Activated CD4-positive, alpha-beta memory T cell treated with anti-CD3 and anti-CD28 coated beads for 36 hours (primary cell): ENCODE measurements at regions of chr1 and their contacts with region 1.

Region 1: GRCh38 chr1:228139944-228140656 is at the start of gene GUK1:
- DNase-seq: peak; percentile 100
- H3K4me3 Mint-ChIP-seq: peak within 1 kb of the TSS; percentile 99
- H3K27ac Mint-ChIP-seq: peak within 1 kb of the TSS; percentile 96
- H3K4me1 Mint-ChIP-seq: peaks cover 27% of the 10 kb centered on the region
- H3K27me3 Mint-ChIP-seq: peaks cover 2% of the 10 kb centered on the region
- total RNA-seq, gene GUK1: 229 to 239 TPM

Region 2: GRCh38 chr1:227787513-227788270 is 352.4 kb before region 1 on chr1:
- CTCF ChIA-PET with region 1: no interaction called
- POLR2A ChIA-PET with region 1: no interaction called
- intact Hi-C with region 1: loop called (anchors 1 kb)
- DNase-seq: peak; percentile 97
- H3K4me3 Mint-ChIP-seq: peak overlapping the region; percentile 68
- H3K27ac Mint-ChIP-seq: no peak overlapping the region
- H3K4me1 Mint-ChIP-seq: peaks cover 11% of the 10 kb centered on the region
- H3K27me3 Mint-ChIP-seq: no peaks in the 10 kb centered on the region

Region 3: GRCh38 chr1:228102791-228103620 is 37.1 kb before region 1 on chr1 and contains the start of gene C1orf35:
- CTCF ChIA-PET with region 1: no interaction called
- POLR2A ChIA-PET with region 1: interaction called, 4 read pairs
- intact Hi-C with region 1: loop called (anchors 1 kb)
- DNase-seq: peak; percentile 96
- H3K4me3 Mint-ChIP-seq: peak within 1 kb of the TSS; percentile 91
- H3K27ac Mint-ChIP-seq: peak within 1 kb of the TSS; percentile 88
- H3K4me1 Mint-ChIP-seq: peaks cover 28% of the 10 kb centered on the region
- H3K27me3 Mint-ChIP-seq: no peaks in the 10 kb centered on the region
- total RNA-seq, gene C1orf35: 21.9 to 22.1 TPM

Region 4: GRCh38 chr1:228109073-228109961 is 30.8 kb before region 1 on chr1 and contains the start of gene MRPL55:
- CTCF ChIA-PET with region 1: no interaction called
- POLR2A ChIA-PET with region 1: interaction called, 4 read pairs
- intact Hi-C with region 1: loop called (anchors 1 kb)
- DNase-seq: peak; percentile 99
- H3K4me3 Mint-ChIP-seq: peak within 1 kb of the TSS; percentile 89
- H3K27ac Mint-ChIP-seq: peak within 1 kb of the TSS; percentile 84
- H3K4me1 Mint-ChIP-seq: peaks cover 25% of the 10 kb centered on the region
- H3K27me3 Mint-ChIP-seq: no peaks in the 10 kb centered on the region
- total RNA-seq, gene MRPL55: 51.1 to 52.7 TPM

Region 5: DNA sequence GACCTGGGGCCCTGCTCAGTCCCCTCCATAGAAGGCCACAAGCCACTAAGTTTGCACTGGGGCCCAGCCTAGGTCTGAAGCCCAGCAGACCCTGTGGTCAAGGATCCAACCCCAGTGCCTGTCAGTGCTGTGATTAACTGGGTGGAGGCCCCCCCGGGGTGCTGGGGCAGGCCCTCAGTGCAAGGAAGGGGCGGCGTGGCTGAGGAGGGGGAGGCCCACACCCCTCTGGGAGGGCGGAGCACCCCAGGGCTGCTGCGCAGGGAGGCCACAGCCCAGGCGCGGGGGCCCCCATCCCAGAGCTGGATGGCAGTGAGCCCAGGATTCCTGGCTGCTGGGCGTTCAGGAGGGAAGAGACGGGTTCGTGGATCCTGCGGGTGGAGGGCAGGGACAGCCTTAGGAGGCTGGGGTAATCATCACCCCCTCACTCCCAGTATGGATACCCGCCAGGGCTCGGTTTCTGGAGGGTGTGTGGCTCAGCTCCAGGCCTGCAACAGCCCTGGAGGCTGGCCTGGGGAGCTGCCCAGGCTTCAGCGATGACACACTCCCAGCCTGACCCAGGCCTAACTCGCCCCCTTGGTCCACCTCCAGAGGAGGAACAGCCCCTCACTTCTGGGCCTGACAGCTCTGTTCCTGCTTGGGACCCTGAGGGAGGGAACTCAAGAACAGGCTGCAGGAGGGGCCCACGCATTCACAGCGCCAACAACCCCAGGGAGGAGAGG is 10.5 kb after region 1 on chr1:
- CTCF ChIA-PET with region 1: no interaction called
- POLR2A ChIA-PET with region 1: no interaction called
- intact Hi-C with region 1: no loop called
- DNase-seq: no peak
- H3K4me3 Mint-ChIP-seq: no peak overlapping the region
- H3K27ac Mint-ChIP-seq: no peak overlapping the region
- H3K4me1 Mint-ChIP-seq: peaks cover 8% of the 10 kb centered on the region
- H3K27me3 Mint-ChIP-seq: no peaks in the 10 kb centered on the region

Region 6: DNA sequence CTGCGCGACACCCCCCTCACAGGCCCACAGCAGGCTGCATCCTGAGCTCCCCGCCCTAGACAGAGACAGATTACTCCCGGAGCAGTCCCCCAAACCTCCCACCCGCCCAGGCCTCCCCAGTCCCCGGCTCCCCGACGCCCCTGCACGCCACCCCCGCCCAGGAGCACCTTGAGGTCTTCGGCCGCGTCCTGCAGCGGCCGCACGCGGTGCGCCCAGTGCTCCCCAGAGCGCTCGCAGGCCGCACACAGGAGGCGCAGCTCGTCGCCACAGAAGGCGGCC is 265.8 kb after region 1 on chr1:
- CTCF ChIA-PET with region 1: no interaction called
- POLR2A ChIA-PET with region 1: no interaction called
- intact Hi-C with region 1: loop called (anchors 2 kb)
- DNase-seq: no peak
- H3K4me3 Mint-ChIP-seq: peak overlapping the region; percentile 83
- H3K27ac Mint-ChIP-seq: peak overlapping the region; percentile 71
- H3K4me1 Mint-ChIP-seq: peaks cover 43% of the 10 kb centered on the region
- H3K27me3 Mint-ChIP-seq: no peaks in the 10 kb centered on the region

Region 7: DNA sequence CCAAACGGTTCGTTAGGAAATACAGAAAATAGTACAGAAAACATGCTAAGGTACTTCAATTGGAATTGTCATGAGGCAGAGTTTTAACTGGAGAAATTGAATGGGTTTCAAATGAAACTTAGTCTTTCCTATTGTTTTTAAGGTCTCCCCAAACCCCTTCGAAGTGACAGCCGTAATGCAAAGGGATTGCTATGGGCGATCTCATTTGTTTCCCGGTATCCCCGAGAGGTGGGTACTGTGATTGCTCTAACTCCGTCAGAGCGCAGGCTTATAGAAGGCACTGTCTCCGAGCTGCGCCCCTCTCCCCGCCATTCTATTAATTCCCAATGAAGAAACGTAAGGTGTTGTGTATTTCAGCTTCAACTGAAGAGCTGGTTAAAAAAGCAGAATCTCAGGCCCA is 325.0 kb after region 1 on chr1:
- CTCF ChIA-PET with region 1: no interaction called
- POLR2A ChIA-PET with region 1: no interaction called
- intact Hi-C with region 1: no loop called
- DNase-seq: no peak
- H3K4me3 Mint-ChIP-seq: peak overlapping the region; percentile 87
- H3K27ac Mint-ChIP-seq: peak overlapping the region; percentile 96
- H3K4me1 Mint-ChIP-seq: peaks cover 46% of the 10 kb centered on the region
- H3K27me3 Mint-ChIP-seq: no peaks in the 10 kb centered on the region